ENCODE measurements at regions of chr7 and their contacts with region 1.

Region 1: GRCh38 chr7:32490127-32490822 is at the start of gene LSM5:
- DNase-seq: peak; percentile 93 to 96
- ATAC-seq: peak; percentile 87 to 93 (median 89)
- H3K4me3 ChIP-seq: peak within 1 kb of the TSS; percentile 89
- H3K27ac ChIP-seq: peak within 1 kb of the TSS; percentile 87
- H3K4me1 ChIP-seq: peaks cover 11% of the 10 kb centered on the region
- H3K27me3 ChIP-seq: no peaks in the 10 kb centered on the region
- CTCF ChIP-seq: no peak
- total RNA-seq, gene LSM5: 19.6 to 44.3 (median 35.6) TPM

Region 2: GRCh38 chr7:32533276-32534029 is 43.2 kb after region 1 on chr7:
- intact Hi-C with region 1: loop called in 1 of 2 experiments (anchors 5 kb)
- DNase-seq: no peak
- ATAC-seq: no peak
- H3K4me3 ChIP-seq: no peak overlapping the region
- H3K27ac ChIP-seq: no peak overlapping the region
- H3K4me1 ChIP-seq: peaks cover 19% of the 10 kb centered on the region
- H3K27me3 ChIP-seq: no peaks in the 10 kb centered on the region
- CTCF ChIP-seq: no peak

Region 3: DNA sequence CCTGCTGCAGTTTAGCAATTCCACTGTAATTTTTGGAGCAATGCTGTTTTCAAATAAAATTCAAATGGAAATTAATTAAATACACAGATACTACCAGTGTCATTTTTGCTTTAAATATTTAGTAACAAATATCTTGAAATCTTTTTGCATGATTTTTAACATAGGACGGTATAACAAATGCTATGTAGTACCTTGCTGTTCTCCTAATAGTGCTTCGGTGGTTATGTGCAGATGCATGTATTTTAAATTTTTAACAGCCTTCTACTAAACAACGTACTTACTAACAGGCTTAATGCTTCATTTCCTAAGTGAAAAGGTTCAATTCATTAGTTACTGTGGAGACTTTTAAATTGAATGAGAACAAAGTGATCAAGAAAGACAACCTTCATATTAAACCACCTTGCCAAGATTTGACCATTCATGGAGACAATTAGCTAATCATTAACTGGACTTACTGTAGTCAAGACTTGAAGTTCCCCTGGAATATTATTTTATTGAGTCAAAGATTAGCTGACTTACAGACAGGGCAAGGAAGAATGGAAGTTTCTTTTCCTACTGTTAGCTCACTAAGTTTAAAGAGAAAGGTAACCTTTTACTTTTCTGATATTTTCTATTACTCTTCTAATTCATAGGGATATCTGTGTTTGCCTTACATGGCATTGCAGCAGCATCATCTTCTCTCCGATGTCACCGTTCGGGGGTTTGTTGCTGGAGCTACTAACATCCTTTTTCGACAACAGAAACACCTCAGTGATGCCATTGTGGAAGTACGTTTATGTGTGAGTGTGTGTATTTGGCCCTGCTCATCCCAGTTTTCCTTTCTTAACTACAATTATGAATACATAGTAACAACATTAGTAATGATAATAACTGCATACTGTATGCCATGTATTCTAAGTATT is 79.4 kb after region 1 on chr7:
- intact Hi-C with region 1: loop called in 1 of 2 experiments (anchors 5 kb)
- DNase-seq: no peak
- ATAC-seq: no peak
- H3K4me3 ChIP-seq: no peak overlapping the region
- H3K27ac ChIP-seq: no peak overlapping the region
- H3K4me1 ChIP-seq: no peaks in the 10 kb centered on the region
- H3K27me3 ChIP-seq: no peaks in the 10 kb centered on the region
- CTCF ChIP-seq: no peak

Region 4: GRCh38 chr7:32588657-32589056 is 98.4 kb after region 1 on chr7:
- intact Hi-C with region 1: no loop called
- DNase-seq: no peak
- ATAC-seq: peak in 2 of 4 donors; percentile 44 to 46
- H3K4me3 ChIP-seq: no peak overlapping the region
- H3K27ac ChIP-seq: peak overlapping the region; percentile 48
- H3K4me1 ChIP-seq: peaks cover 5% of the 10 kb centered on the region
- H3K27me3 ChIP-seq: no peaks in the 10 kb centered on the region
- CTCF ChIP-seq: no peak

Region 5: GRCh38 chr7:32957326-32958045 is 467.2 kb after region 1 on chr7 and contains the start of gene FKBP9:
- intact Hi-C with region 1: loop called in 1 of 2 experiments (anchors 5 kb)
- DNase-seq: peak; percentile 91 to 95
- ATAC-seq: peak; percentile 92 to 95 (median 94)
- H3K4me3 ChIP-seq: peak within 1 kb of the TSS; percentile 94
- H3K27ac ChIP-seq: peak within 1 kb of the TSS; percentile 89
- H3K4me1 ChIP-seq: peaks cover 15% of the 10 kb centered on the region
- H3K27me3 ChIP-seq: no peaks in the 10 kb centered on the region
- CTCF ChIP-seq: no peak
- total RNA-seq, gene FKBP9: 23.2 to 42.6 (median 33.8) TPM

Region 6: DNA sequence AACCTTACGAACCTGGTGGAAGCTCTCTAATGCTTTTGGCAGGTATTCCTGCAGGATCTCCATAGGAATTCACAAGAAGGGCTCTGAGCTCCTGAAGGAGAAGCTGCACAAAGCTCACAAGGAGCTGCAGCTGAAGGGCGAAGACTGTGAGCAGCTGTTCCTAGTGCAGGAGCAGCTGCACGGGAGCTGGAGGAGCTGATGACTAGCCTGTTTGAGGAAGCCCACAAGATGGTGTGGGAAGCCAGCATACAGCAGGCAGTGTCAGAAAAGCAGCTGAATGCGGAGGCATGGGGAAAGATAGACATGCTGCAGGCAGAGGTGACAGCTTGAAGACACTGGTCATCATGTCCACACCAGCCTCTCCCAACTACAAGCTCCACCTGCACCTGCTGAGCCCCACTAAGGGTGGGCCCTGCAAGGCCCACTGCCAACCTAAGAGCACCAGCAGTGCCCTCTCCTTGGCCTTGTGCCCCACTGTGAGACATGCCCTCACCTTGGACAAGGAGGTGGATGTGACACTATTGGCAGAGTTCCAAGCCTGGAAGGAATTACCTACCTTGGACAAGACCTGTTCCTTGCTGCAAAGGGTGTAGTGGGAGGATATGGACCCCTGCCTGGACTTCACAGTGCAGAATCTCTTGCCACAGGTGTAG is 889.7 kb after region 1 on chr7:
- intact Hi-C with region 1: no loop called
- DNase-seq: no peak
- ATAC-seq: no peak
- H3K4me3 ChIP-seq: no peak overlapping the region
- H3K27ac ChIP-seq: no peak overlapping the region
- H3K4me1 ChIP-seq: no peaks in the 10 kb centered on the region
- H3K27me3 ChIP-seq: no peaks in the 10 kb centered on the region
- CTCF ChIP-seq: no peak

Measured in psoas muscle (tissue), 8 donors.